Endothelial cell of umbilical vein (primary cell): ENCODE measurements at regions of chr16 and their contacts with region 1.

Region 1: GRCh38 chr16:71610936-71611871 is 14.8 kb upstream of the MARVELD3 start:
- DNase-seq: peak; percentile 64
- H3K4me3 ChIP-seq: no peak overlapping the region
- H3K27ac ChIP-seq: no peak overlapping the region
- H3K4me1 ChIP-seq: no peaks in the 10 kb centered on the region
- H3K27me3 ChIP-seq: no peaks in the 10 kb centered on the region
- CTCF ChIP-seq: peak; percentile 97 to 99
- POLR2A ChIP-seq: no peak

Region 2: GRCh38 chr16:71412270-71413160 is 198.7 kb before region 1 on chr16:
- CTCF ChIA-PET with region 1: interaction called, 42 read pairs
- POLR2A ChIA-PET with region 1: no interaction called
- dilution Hi-C with region 1: no loop called
- intact Hi-C with region 1: loop called (anchors 2 kb)
- DNase-seq: peak; percentile 59
- H3K4me3 ChIP-seq: no peak overlapping the region
- H3K27ac ChIP-seq: no peak overlapping the region
- H3K4me1 ChIP-seq: no peaks in the 10 kb centered on the region
- H3K27me3 ChIP-seq: no peaks in the 10 kb centered on the region
- CTCF ChIP-seq: peak; percentile 74 to 81
- POLR2A ChIP-seq: no peak

Region 3: DNA sequence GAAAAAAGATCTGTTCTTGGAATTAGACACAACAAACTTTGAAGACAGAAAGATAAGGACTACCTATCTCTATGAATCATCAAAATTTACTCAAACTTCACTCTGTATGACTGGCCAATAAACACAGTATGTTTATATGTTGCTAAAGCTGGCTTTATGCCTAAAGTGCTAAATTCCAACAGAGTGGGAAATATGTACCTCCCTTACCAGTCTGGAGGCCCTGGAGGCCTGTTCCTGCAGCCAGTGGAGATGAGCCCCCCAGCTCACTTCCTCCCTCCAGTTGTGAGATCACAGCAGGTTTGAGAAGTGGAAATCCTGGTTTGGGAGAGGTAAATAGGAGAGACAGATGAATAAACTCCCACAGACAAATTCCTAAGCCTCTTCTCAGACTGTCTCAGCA is 158.2 kb before region 1 on chr16:
- CTCF ChIA-PET with region 1: no interaction called
- POLR2A ChIA-PET with region 1: no interaction called
- dilution Hi-C with region 1: no loop called
- intact Hi-C with region 1: no loop called
- DNase-seq: no peak
- H3K4me3 ChIP-seq: no peak overlapping the region
- H3K27ac ChIP-seq: no peak overlapping the region
- H3K4me1 ChIP-seq: no peaks in the 10 kb centered on the region
- H3K27me3 ChIP-seq: no peaks in the 10 kb centered on the region
- CTCF ChIP-seq: no peak
- POLR2A ChIP-seq: no peak

Region 4: GRCh38 chr16:71499775-71500364 is 111.3 kb before region 1 on chr16:
- CTCF ChIA-PET with region 1: interaction called, 13 read pairs
- POLR2A ChIA-PET with region 1: no interaction called
- dilution Hi-C with region 1: no loop called
- intact Hi-C with region 1: no loop called
- DNase-seq: peak; percentile 71
- H3K4me3 ChIP-seq: no peak overlapping the region
- H3K27ac ChIP-seq: no peak overlapping the region
- H3K4me1 ChIP-seq: no peaks in the 10 kb centered on the region
- H3K27me3 ChIP-seq: no peaks in the 10 kb centered on the region
- CTCF ChIP-seq: peak; percentile 46 to 65
- POLR2A ChIP-seq: no peak

Region 5: DNA sequence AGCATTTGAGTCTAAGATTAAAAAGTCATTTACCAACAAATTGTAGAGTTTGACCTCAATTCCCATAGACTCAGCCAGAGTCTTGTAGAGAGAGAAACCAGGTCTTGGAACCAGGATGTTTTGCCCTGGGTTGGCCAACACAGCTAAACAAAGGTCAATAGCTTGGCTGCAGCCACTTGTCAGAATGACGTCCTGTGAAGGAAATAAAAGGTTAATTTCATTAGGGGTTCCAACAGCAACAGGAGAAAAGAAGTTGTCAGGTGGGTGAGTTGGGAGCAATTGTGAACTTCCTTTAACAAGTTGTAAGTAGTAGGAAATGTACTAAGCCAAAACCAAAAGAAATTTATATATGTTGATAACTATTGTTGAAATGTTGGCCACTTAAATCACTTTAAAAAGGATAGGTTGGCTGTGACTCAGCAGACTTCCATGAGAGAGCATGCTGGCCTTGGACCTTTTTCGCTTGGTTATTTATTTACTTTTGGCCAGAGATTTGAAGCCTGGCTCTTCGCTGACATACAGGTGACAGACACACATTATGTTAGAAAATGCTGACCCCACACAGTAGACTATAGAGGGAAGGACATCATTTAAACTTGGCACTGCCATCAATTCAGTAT is 38.6 kb before region 1 on chr16:
- CTCF ChIA-PET with region 1: interaction called, 11 read pairs
- POLR2A ChIA-PET with region 1: no interaction called
- dilution Hi-C with region 1: no loop called
- intact Hi-C with region 1: no loop called
- DNase-seq: no peak
- H3K4me3 ChIP-seq: no peak overlapping the region
- H3K27ac ChIP-seq: no peak overlapping the region
- H3K4me1 ChIP-seq: no peaks in the 10 kb centered on the region
- H3K27me3 ChIP-seq: peaks cover 0 to 2% of the 10 kb centered on the region in 2 experiments
- CTCF ChIP-seq: no peak
- POLR2A ChIP-seq: no peak

Region 6: GRCh38 chr16:71622088-71622487 is 10.9 kb after region 1 on chr16:
- CTCF ChIA-PET with region 1: interaction called, 18 read pairs
- POLR2A ChIA-PET with region 1: no interaction called
- dilution Hi-C with region 1: no loop called
- intact Hi-C with region 1: no loop called
- DNase-seq: no peak
- H3K4me3 ChIP-seq: no peak overlapping the region
- H3K27ac ChIP-seq: no peak overlapping the region
- H3K4me1 ChIP-seq: peaks cover 2% of the 10 kb centered on the region
- H3K27me3 ChIP-seq: peaks cover 11 to 24% of the 10 kb centered on the region in 2 experiments
- CTCF ChIP-seq: no peak
- POLR2A ChIP-seq: no peak